Transverse colon (tissue), 4 donors: ENCODE measurements at regions of chr20 and their contacts with region 1.

Region 1: GRCh38 chr20:45095753-45096371 is 5.1 kb downstream of the KCNS1 start:
- DNase-seq: peak; percentile 58
- H3K4me3 ChIP-seq: no peak overlapping the region
- H3K27ac ChIP-seq: no peak overlapping the region
- H3K4me1 ChIP-seq: peaks cover 0 to 14% (median 8%) of the 10 kb centered on the region in 4 donors
- H3K27me3 ChIP-seq: peaks cover 44% of the 10 kb centered on the region
- CTCF ChIP-seq: peak; percentile 57 to 80 (median 75)
- EP300 ChIP-seq: no peak
- POLR2A ChIP-seq: no peak

Region 2: GRCh38 chr20:45011108-45011526 is 84.7 kb before region 1 on chr20:
- in situ Hi-C with region 1: loop called in 1 of 4 experiments (anchors 10 kb)
- intact Hi-C with region 1: no loop called
- DNase-seq: peak; percentile 65
- H3K4me3 ChIP-seq: no peak overlapping the region
- H3K27ac ChIP-seq: no peak overlapping the region
- H3K4me1 ChIP-seq: peaks cover 2 to 35% (median 4%) of the 10 kb centered on the region in 4 donors
- H3K27me3 ChIP-seq: no peaks in the 10 kb centered on the region
- CTCF ChIP-seq: peak; percentile 53 to 61 (median 60)
- EP300 ChIP-seq: no peak
- POLR2A ChIP-seq: no peak